ENCODE measurements at regions of chr15 and their contacts with region 1.

Region 1: GRCh38 chr15:55221090-55222011 is 24.6 kb upstream of the RSL24D1 start:
- DNase-seq: peak; percentile 42
- CTCF ChIP-seq: no peak

Region 2: GRCh38 chr15:55094136-55094535 is 127.2 kb before region 1 on chr15:
- in situ Hi-C with region 1: no loop called
- DNase-seq: no peak
- CTCF ChIP-seq: no peak

Region 3: DNA sequence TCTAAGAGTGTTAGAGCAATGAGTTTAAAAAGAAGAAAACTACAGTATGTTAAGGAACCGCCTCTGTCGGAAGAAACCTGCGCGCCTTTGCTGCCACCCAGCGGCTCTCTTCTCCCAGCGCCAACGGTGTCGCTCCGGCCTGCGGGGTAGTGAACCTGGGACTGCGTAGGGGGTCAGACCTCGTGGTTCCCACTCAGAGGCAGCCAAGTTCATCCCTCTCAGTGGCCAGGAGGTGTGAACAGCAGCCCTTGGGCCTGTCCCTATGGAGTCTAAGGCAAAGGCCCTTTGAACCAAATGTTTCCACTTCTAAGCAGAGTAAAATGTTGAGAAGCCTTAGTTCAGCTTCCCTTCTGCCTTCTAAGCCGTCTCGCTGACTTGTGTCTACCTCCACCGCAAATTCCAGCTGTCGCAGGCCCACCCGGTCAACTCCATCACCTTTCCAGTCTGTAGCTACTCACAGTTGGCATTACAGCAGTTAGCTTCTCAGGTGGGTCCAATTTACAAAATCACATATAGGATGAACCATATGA is 69.2 kb after region 1 on chr15:
- in situ Hi-C with region 1: loop called (anchors 5 kb)
- DNase-seq: peak; percentile 85
- CTCF ChIP-seq: peak; percentile 93

Region 4: DNA sequence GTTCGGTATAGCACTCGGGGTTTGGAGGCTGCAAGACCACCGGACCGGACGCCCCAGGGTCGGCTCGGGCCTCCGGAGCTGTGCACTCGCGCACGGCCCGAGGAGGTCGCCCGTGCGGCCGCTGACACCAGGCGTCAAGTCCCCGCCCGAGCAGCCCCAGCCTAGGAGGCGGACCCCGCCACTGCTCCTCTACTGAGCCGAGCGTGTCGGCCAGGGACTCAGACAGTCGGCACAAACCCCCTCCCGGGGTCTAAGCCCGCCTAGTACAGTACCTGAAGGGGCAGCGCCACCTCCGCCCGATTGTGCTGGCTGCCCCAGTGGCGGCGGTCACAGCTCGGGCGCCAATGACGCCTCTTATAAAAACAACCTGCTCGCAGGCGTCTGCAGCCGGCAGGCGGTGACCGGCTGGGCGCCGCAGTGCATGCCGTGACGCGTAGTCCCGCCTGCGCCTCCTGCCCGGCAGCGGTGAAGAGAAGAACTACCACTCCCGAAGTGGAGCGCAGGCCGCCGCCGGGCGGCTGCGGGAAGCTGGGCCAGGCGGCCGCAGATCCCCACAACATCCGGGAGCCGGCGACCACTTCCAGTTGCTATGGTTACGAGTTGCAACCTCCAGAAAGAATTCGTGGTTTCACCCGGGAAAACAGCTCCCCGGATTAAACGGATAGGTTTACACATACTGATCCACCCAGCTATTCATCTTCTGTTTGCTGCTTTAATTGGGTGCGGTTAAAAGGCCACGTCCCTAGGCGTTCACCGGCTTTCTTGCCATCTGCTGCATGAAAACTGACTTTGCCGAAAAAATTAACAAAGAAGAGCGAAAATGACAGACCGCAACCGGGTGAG is 186.8 kb after region 1 on chr15 and contains the starts of genes CCPG1 and PIERCE2:
- in situ Hi-C with region 1: loop called (anchors 25 kb)
- DNase-seq: peak; percentile 92
- CTCF ChIP-seq: peak; percentile 53